AG04450 (cell line): ENCODE measurements at regions of chr10 and their contacts with region 1.

Region 1: DNA sequence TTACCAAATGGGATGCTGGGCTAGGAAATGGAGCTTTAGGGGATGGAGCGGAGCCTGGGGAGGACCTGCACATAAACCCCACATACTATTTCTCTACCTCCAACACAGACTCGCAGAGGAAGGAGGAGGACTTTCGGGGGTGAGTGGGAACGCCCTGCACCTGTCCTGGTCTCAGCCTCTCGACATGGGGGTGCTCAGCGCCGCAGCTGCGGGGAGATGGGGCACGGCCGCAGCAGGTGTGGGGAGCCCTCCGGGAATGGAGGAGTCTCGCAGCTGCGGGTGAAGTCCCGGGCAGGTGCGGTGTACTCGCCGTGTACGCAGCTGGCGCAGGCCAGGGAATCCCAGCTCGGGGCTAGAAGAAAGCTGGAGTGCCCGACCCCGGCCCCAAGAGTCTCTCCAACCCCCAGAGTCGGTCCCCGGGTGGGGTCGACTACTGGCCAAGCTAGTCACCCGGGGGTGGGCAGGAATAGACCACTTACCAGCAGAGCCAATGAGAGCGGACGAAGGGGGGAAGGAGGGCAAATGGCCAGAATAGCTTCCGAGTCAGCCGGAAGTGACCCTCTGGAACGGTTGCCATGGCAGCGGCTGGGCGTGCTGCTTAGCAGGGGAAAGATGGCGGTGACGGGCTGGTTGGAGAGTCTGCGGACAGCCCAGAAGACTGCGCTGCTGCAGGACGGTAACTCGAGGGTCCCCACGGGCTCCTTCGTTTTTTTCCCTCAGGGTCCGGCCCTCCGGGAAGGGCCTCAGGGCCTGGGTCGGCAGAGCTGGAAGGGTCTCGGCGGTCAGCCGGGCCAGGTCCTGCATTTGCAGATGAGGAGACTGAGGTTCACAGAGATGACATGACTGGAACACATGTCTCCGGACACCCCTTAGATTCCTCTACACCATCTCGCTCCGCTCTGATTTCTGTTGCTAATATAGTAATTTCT is at the starts of genes DPCD and POLL:
- DNase-seq: peak; percentile 81
- H3K4me3 ChIP-seq: peak within 1 kb of the TSS; percentile 99
- H3K27ac ChIP-seq: no peak within 1 kb of the TSS
- H3K27me3 ChIP-seq: no peaks in the 10 kb centered on the region
- CTCF ChIP-seq: no peak
- polyA plus RNA-seq, gene DPCD: 49.7 and 51.1 TPM in 2 replicates
- polyA plus RNA-seq, gene POLL: 14.8 and 16.4 TPM in 2 replicates

Region 2: GRCh38 chr10:101545898-101546297 is 42.1 kb before region 1 on chr10:
- CTCF ChIA-PET with region 1: no interaction called
- POLR2A ChIA-PET with region 1: no interaction called
- DNase-seq: no peak
- H3K4me3 ChIP-seq: no peak overlapping the region
- H3K27ac ChIP-seq: no peak overlapping the region
- H3K27me3 ChIP-seq: no peaks in the 10 kb centered on the region
- CTCF ChIP-seq: no peak

Region 3: DNA sequence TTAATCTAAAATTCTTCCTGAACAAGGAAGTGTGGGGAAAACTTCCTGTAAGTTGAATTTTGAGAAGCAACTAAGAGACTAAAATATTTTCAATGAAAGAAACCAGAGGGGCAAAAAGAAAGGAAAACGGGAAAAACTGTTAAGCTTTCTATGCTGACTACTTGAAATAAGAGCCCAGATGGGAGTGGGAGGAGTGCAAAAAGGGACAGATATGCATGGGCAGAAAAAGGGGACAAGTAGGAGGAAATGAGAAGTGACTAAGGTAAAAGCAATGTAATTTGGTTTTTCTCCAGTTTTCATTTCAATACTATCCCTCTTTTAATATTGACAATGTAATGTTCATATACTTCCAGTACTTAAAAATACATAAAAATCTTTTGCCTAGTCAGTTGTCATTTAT is 219.2 kb after region 1 on chr10:
- CTCF ChIA-PET with region 1: no interaction called
- POLR2A ChIA-PET with region 1: no interaction called
- DNase-seq: no peak
- H3K4me3 ChIP-seq: no peak overlapping the region
- H3K27ac ChIP-seq: no peak overlapping the region
- H3K27me3 ChIP-seq: no peaks in the 10 kb centered on the region
- CTCF ChIP-seq: no peak

Region 4: GRCh38 chr10:101818119-101818871 is 230.3 kb after region 1 on chr10 and contains the start of gene OGA:
- CTCF ChIA-PET with region 1: no interaction called
- POLR2A ChIA-PET with region 1: interaction called, 11 read pairs
- DNase-seq: peak; percentile 100
- H3K4me3 ChIP-seq: peak within 1 kb of the TSS; percentile 98
- H3K27ac ChIP-seq: peak within 1 kb of the TSS; percentile 90
- H3K27me3 ChIP-seq: no peaks in the 10 kb centered on the region
- CTCF ChIP-seq: no peak
- polyA plus RNA-seq, gene OGA: 71.9 and 82.6 TPM in 2 replicates

Region 5: GRCh38 chr10:101938316-101939281 is 350.6 kb after region 1 on chr10:
- CTCF ChIA-PET with region 1: no interaction called
- POLR2A ChIA-PET with region 1: no interaction called
- DNase-seq: peak; percentile 82
- H3K4me3 ChIP-seq: peak overlapping the region; percentile 21
- H3K27ac ChIP-seq: peak overlapping the region; percentile 96
- H3K27me3 ChIP-seq: no peaks in the 10 kb centered on the region
- CTCF ChIP-seq: no peak